ENCODE measurements at regions of chr12 and their contacts with region 1.

Region 1: GRCh38 chr12:108514973-108515814 is at the start of gene FICD:
- DNase-seq: peak; percentile 99
- H3K4me3 ChIP-seq: peak within 1 kb of the TSS; percentile 71 to 85 (median 81)
- H3K27ac ChIP-seq: peak within 1 kb of the TSS; percentile 52
- H3K4me1 ChIP-seq: peaks cover 9% of the 10 kb centered on the region
- H3K27me3 ChIP-seq: no peaks in the 10 kb centered on the region
- CTCF ChIP-seq: no peak
- total RNA-seq, gene FICD: 5.5 to 5.6 TPM

Region 2: DNA sequence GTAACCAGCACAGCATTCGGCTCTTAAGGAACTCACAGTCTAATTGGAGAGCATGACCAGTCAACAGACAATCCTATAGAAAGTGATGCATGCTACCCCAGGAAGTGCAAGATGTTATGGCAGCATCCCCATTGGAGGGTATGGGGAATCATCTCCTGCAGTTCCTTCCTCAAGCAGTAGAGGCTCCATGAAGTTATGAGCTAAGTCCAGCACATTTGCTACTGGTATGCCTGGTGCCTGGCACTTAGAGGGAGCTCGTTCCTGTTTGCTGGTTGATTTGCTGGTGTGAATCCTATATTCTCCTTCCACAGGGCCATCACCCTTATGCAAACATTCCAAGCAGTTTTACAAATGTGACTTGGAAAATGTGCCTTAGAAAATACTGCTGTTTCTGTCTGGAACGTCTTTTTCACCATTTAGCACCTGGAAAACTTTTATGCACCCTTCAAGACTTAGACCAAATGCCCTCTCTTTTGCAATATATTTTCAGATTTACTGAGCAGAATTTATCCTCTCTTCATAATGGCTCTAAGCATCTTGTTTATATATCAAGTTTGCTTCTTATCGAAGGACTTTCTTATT is 522.2 kb before region 1 on chr12:
- CTCF ChIA-PET with region 1: no interaction called
- dilution Hi-C with region 1: no loop called
- in situ Hi-C with region 1: no loop called
- intact Hi-C with region 1: loop called (anchors 1 kb)
- DNase-seq: peak; percentile 54
- H3K4me3 ChIP-seq: no peak overlapping the region
- H3K27ac ChIP-seq: no peak overlapping the region
- H3K4me1 ChIP-seq: no peaks in the 10 kb centered on the region
- H3K27me3 ChIP-seq: no peaks in the 10 kb centered on the region
- CTCF ChIP-seq: peak; percentile 43 to 71

Region 3: GRCh38 chr12:108099073-108099472 is 416.1 kb before region 1 on chr12:
- CTCF ChIA-PET with region 1: no interaction called
- dilution Hi-C with region 1: no loop called
- in situ Hi-C with region 1: no loop called
- intact Hi-C with region 1: loop called (anchors 2 kb)
- DNase-seq: no peak
- H3K4me3 ChIP-seq: no peak overlapping the region
- H3K27ac ChIP-seq: no peak overlapping the region
- H3K4me1 ChIP-seq: no peaks in the 10 kb centered on the region
- H3K27me3 ChIP-seq: no peaks in the 10 kb centered on the region
- CTCF ChIP-seq: peak; percentile 45 to 49

Region 4: GRCh38 chr12:108175310-108175709 is 339.9 kb before region 1 on chr12:
- CTCF ChIA-PET with region 1: no interaction called
- dilution Hi-C with region 1: no loop called
- in situ Hi-C with region 1: no loop called
- intact Hi-C with region 1: loop called (anchors 1 kb)
- DNase-seq: no peak
- H3K4me3 ChIP-seq: no peak overlapping the region
- H3K27ac ChIP-seq: no peak overlapping the region
- H3K4me1 ChIP-seq: no peaks in the 10 kb centered on the region
- H3K27me3 ChIP-seq: no peaks in the 10 kb centered on the region
- CTCF ChIP-seq: peak in 1 of 2 donors; percentile 7

Region 5: DNA sequence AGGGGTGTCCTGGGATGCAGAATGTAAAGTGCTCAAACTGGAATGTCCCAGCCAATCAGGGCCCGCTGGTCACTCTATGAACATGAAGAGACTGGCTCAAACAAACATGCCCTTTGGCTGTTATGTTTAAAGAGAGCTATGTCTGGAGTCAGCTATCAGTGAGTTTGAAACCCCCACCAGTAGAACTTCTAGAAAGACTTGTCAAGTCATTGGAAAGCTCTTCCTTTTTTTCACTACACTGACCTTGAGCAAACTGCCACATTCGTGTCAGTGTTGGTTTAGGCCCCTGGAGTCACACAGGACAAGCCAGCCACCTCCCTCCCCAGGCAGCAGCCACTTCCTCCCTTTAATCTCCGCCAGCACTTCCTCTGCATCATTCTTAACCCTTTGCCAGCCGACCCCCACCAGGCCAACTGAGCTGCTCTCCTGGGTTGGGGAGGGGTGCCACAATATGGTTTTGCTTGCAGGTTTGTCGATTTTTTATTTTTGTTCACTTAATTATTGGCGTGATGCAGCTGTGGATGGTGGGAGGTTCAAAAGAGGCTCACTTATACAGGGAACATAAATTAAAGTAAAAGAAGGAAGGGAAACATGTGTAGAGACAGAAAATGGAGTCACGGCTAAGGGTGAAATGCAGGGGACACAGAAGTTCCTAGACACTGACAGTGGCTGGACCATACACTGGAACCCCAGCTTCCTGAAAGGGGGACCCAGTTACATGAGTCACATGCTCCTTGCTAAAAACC is 201.4 kb before region 1 on chr12:
- CTCF ChIA-PET with region 1: no interaction called
- dilution Hi-C with region 1: no loop called
- in situ Hi-C with region 1: no loop called
- intact Hi-C with region 1: no loop called
- DNase-seq: no peak
- H3K4me3 ChIP-seq: no peak overlapping the region
- H3K27ac ChIP-seq: no peak overlapping the region
- H3K4me1 ChIP-seq: no peaks in the 10 kb centered on the region
- H3K27me3 ChIP-seq: no peaks in the 10 kb centered on the region
- CTCF ChIP-seq: no peak

Region 6: GRCh38 chr12:108618079-108618952 is 103.1 kb after region 1 on chr12:
- CTCF ChIA-PET with region 1: no interaction called
- dilution Hi-C with region 1: no loop called
- in situ Hi-C with region 1: no loop called
- intact Hi-C with region 1: loop called (anchors 1 kb)
- DNase-seq: peak; percentile 57
- H3K4me3 ChIP-seq: no peak overlapping the region
- H3K27ac ChIP-seq: no peak overlapping the region
- H3K4me1 ChIP-seq: peaks cover 6% of the 10 kb centered on the region
- H3K27me3 ChIP-seq: no peaks in the 10 kb centered on the region
- CTCF ChIP-seq: peak; percentile 72 to 97